A549 (cell line): ENCODE measurements at regions of chr17 and their contacts with region 1.

Region 1: GRCh38 chr17:80454557-80455335 is 21.7 kb downstream of the NPTX1 start:
- DNase-seq: peak; percentile 98 to 99
- ATAC-seq: peak; percentile 89 to 95
- H3K4me3 ChIP-seq: peak overlapping the region; percentile 77
- H3K27ac ChIP-seq: peak overlapping the region; percentile 96 to 99
- H3K4me1 ChIP-seq: peaks cover 15% of the 10 kb centered on the region
- CTCF ChIP-seq: no peak
- EP300 ChIP-seq: no peak
- POLR2A ChIP-seq: peak; percentile 74
- RAD21 ChIP-seq: no peak

Region 2: DNA sequence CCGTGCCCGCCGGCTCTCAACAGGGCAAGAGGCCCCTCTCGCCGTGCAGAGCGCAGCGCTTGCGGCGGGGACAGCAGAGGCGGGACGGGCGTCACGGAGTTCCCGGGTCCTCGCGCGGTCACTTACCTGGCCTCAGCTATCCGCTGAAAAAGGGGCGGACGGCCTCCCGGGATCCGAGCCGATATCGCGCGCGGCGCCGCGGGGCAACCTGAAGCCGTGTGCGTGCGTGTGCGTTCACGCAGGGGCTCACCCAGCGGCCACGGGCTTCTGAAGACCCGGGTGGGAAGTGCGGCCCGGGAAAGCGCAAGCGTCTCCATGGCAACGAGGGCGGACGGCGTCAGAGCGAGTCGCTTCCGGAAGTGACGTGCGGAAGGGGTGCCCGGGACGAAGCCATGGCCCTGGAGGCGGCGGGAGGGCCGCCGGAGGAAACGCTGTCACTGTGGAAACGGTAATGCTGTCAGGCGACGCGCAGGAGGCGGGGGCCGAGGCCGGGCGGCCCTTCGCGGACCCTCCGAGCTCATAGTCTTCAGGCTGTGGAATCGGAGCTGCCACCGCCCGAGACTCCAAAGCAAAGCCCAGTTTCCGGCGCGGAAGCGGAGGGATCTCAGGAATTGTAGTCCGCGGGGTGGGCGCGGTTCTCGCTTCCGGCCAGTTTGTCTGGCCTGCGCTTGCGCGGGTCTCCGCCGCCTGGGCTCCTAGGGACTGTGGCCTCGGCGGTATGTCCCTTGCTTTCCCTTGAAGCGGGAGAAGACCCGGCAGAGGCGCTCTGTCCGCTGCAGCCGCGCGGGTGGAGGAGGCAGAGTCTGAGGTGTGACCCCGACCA is 39.7 kb before region 1 on chr17 and contains the start of gene ENDOV:
- CTCF ChIA-PET with region 1: interaction called, 3 read pairs
- POLR2A ChIA-PET with region 1: interaction called, 12 read pairs
- DNase-seq: peak; percentile 97 to 99
- ATAC-seq: peak; percentile 91 to 92
- H3K4me3 ChIP-seq: peak within 1 kb of the TSS; percentile 74
- H3K27ac ChIP-seq: peak within 1 kb of the TSS; percentile 94 to 97
- H3K4me1 ChIP-seq: peaks cover 17% of the 10 kb centered on the region
- CTCF ChIP-seq: no peak
- EP300 ChIP-seq: no peak
- POLR2A ChIP-seq: peak; percentile 65
- RAD21 ChIP-seq: no peak
- polyA plus RNA-seq, gene ENDOV: 33.2 and 37.2 TPM in 2 replicates

Region 3: GRCh38 chr17:80468242-80468641 is 13.5 kb after region 1 on chr17:
- CTCF ChIA-PET with region 1: interaction called, 10 read pairs
- POLR2A ChIA-PET with region 1: interaction called, 35 read pairs
- DNase-seq: no peak
- ATAC-seq: no peak
- H3K4me3 ChIP-seq: no peak overlapping the region
- H3K27ac ChIP-seq: no peak overlapping the region
- H3K4me1 ChIP-seq: no peaks in the 10 kb centered on the region
- CTCF ChIP-seq: no peak
- EP300 ChIP-seq: no peak
- POLR2A ChIP-seq: no peak
- RAD21 ChIP-seq: no peak

Region 4: DNA sequence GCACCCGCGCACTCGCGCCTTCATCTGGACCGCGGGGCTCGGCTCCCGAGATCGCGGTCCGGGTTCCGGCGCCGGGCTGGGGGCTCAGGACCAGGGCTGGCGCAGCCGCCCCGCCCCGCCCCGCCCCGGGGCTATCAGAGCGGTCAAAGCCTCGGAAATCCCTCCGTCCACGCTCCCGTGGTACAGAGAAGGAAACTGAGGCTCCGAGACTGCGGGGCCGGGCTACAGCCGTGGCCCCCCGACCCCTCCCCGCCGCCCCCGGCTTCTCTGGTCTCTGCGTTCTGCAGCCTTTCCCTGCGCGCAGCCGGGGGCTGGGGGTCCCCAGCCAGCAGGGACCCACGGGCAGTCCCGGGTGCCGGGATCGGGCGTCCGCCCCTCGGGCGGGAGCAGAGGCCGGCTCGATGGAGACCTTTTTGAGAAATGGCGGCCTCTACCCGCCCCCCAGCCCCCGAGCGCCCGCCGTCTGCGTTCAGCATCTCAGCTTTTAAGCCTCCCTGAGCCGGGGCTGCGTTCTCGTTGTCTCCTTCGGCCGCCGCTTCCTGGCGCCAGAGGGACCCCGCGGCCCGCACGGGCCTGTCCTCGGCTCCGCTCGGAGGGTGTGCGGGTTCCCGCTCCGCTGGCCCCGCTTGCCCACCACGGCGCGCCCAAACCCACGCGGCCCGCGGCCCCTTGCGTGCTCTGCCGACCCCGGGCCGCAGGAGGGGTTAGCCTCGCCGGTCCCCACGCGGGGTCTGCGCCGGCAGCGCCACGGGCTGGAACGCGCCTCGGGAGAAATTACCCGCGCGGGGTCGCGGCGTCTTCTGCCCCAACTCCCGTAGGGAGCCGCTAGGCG is 23.1 kb after region 1 on chr17:
- CTCF ChIA-PET with region 1: interaction called, 4 read pairs
- POLR2A ChIA-PET with region 1: interaction called, 27 read pairs
- DNase-seq: peak; percentile 70 to 75
- ATAC-seq: peak; percentile 20 to 70; a peak in 3 of 6 replicates
- H3K4me3 ChIP-seq: peak overlapping the region; percentile 54
- H3K27ac ChIP-seq: peak overlapping the region; percentile 60 to 80
- H3K4me1 ChIP-seq: peaks cover 56% of the 10 kb centered on the region
- CTCF ChIP-seq: peak; percentile 67
- EP300 ChIP-seq: no peak
- POLR2A ChIP-seq: no peak
- RAD21 ChIP-seq: peak; percentile 77 to 90

Region 5: GRCh38 chr17:80640366-80641084 is 185.8 kb after region 1 on chr17:
- CTCF ChIA-PET with region 1: no interaction called
- POLR2A ChIA-PET with region 1: no interaction called
- DNase-seq: no peak
- ATAC-seq: no peak
- H3K4me3 ChIP-seq: no peak overlapping the region
- H3K27ac ChIP-seq: no peak overlapping the region
- H3K4me1 ChIP-seq: no peaks in the 10 kb centered on the region
- CTCF ChIP-seq: no peak
- EP300 ChIP-seq: no peak
- POLR2A ChIP-seq: peak; percentile 9; the same call in 1 of the 2 replicates
- RAD21 ChIP-seq: no peak